ENCODE measurements at regions of chr3 and their contacts with region 1.

Region 1: GRCh38 chr3:193780810-193781472 is 187.9 kb downstream of the OPA1 start:
- DNase-seq: no peak
- H3K4me3 ChIP-seq: no peak overlapping the region
- H3K27ac ChIP-seq: peak overlapping the region in 3 of 4 donors; percentile 34 to 49 (median 49)
- H3K4me1 ChIP-seq: peaks cover 8 to 15% (median 11%) of the 10 kb centered on the region in 4 donors
- H3K27me3 ChIP-seq: peaks cover 0 to 25% (median 0%) of the 10 kb centered on the region in 4 donors
- CTCF ChIP-seq: peak; percentile 79 to 86 (median 85)
- EP300 ChIP-seq: no peak
- POLR2A ChIP-seq: no peak

Region 2: GRCh38 chr3:193764959-193765358 is 16.0 kb before region 1 on chr3:
- intact Hi-C with region 1: no loop called
- DNase-seq: peak; percentile 70
- H3K4me3 ChIP-seq: no peak overlapping the region
- H3K27ac ChIP-seq: no peak overlapping the region
- H3K4me1 ChIP-seq: no peaks in the 10 kb centered on the region
- H3K27me3 ChIP-seq: no peaks in the 10 kb centered on the region
- CTCF ChIP-seq: no peak
- EP300 ChIP-seq: no peak
- POLR2A ChIP-seq: no peak

Region 3: DNA sequence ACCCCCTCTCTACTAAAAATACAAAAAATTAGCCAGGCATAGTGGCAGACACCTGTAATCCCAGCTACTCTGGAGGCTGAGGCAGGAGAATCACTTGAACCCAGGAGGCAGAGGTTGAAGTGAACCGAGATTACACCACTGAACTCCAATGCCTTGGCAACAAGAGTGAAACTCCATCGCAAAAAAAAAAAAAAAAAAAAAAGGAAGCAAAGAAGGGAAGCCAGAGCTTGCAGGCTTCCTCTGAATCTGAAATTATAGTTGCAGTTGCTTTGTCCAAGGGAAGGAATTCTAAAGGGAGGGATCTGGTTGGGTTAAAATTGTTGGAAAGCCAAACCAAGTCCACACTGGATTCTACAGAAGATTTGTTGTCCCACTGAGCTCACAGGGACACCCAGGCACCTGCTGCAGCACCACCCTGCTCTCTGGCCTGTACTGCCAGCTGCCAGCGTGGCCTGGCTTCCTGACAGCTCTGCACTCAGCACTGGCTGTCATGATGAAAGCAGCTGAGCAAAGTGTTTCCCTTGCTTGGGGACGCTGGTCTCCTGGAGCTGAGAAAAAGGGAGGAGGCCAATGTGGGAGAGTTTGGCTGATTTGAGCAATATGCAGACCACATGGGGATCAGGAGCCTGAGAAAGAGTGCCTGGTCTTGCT is 266.2 kb after region 1 on chr3:
- intact Hi-C with region 1: no loop called
- DNase-seq: no peak
- H3K4me3 ChIP-seq: no peak overlapping the region
- H3K27ac ChIP-seq: peak overlapping the region in 2 of 4 donors; percentile 29 to 35
- H3K4me1 ChIP-seq: peaks cover 11 to 13% (median 12%) of the 10 kb centered on the region in 4 donors
- H3K27me3 ChIP-seq: no peaks in the 10 kb centered on the region
- CTCF ChIP-seq: no peak
- EP300 ChIP-seq: no peak
- POLR2A ChIP-seq: no peak

Region 4: GRCh38 chr3:194070634-194071409 is 289.9 kb after region 1 on chr3:
- intact Hi-C with region 1: loop called (anchors 5 kb)
- DNase-seq: no peak
- H3K4me3 ChIP-seq: peak overlapping the region; percentile 60 to 74 (median 62)
- H3K27ac ChIP-seq: peak overlapping the region; percentile 78 to 88 (median 84)
- H3K4me1 ChIP-seq: peaks cover 18 to 23% (median 22%) of the 10 kb centered on the region in 4 donors
- H3K27me3 ChIP-seq: no peaks in the 10 kb centered on the region
- CTCF ChIP-seq: no peak
- EP300 ChIP-seq: no peak
- POLR2A ChIP-seq: no peak

Region 5: DNA sequence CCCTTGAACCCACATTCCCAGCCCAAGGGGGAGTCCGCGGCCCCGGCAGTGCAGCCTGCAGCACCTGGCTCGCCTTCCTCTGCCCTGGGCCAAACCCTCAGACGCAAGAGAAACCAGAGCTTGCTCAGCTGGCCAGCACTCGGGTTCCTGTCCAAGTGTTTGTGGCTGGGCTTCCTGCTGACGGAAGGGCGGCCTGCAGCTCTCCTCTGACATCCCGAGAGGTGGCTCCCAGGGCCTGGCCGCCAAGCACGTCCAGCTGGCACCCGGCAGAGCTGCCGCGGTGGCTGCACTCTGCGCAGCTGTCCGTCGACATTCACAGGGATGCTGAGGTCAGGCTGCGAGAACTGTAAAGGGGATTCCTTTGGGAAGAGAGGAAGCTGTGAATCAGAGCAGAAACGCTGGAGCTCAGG is 484.5 kb after region 1 on chr3:
- intact Hi-C with region 1: loop called (anchors 5 kb)
- DNase-seq: no peak
- H3K4me3 ChIP-seq: peak overlapping the region in 2 of 4 donors; percentile 10 to 18
- H3K27ac ChIP-seq: peak overlapping the region; percentile 56 to 80 (median 64)
- H3K4me1 ChIP-seq: peaks cover 48 to 58% (median 56%) of the 10 kb centered on the region in 4 donors
- H3K27me3 ChIP-seq: no peaks in the 10 kb centered on the region
- CTCF ChIP-seq: no peak
- EP300 ChIP-seq: no peak
- POLR2A ChIP-seq: no peak

Measured in esophagus muscularis mucosa (tissue), 4 donors.